Panc1 (cell line): ENCODE measurements at regions of chr11 and their contacts with region 1.

Region 1: DNA sequence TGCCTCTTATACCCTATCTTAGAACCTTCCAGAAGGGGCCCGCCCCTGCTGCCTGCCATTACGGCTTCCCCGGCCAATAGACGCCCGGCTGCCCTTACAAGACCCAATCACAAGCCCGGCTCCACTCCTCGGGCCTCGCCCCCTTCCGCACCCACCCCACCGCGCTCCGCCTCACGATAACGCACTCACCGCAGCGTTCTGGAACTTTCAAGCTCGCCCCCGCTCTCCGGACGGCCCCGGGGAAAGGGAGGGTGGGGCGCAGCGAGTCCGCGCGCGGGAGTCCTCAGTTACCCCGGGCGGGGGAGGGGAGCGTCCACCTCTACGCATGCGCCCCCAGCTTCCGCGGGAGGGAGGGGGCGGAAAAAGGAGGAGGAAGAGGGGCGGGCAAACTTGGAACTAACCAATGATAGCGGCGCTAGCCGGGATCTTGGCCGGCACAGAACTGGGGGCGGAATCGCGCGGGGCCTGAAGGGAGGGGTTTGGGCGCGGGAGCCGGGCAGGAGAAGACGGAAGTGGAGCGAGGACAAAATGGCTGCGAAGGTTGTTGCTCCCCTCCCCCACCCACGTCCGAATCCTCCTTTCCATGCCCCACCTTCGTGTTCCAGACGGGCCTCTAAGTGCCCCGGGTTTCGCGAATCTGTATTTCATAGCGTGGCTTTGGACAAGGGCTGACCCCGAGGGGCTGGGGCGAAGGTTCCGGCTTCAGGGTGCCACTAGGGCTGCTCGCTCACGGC is 389 bp upstream of the HSPA8 start:
- DNase-seq: peak; percentile 93
- ATAC-seq: peak; percentile 93
- H3K4me3 ChIP-seq: peak overlapping the region; percentile 95 to 98
- H3K27ac ChIP-seq: peak overlapping the region; percentile 100
- H3K4me1 ChIP-seq: peaks cover 29% of the 10 kb centered on the region
- H3K27me3 ChIP-seq: no peaks in the 10 kb centered on the region
- CTCF ChIP-seq: no peak

Region 2: DNA sequence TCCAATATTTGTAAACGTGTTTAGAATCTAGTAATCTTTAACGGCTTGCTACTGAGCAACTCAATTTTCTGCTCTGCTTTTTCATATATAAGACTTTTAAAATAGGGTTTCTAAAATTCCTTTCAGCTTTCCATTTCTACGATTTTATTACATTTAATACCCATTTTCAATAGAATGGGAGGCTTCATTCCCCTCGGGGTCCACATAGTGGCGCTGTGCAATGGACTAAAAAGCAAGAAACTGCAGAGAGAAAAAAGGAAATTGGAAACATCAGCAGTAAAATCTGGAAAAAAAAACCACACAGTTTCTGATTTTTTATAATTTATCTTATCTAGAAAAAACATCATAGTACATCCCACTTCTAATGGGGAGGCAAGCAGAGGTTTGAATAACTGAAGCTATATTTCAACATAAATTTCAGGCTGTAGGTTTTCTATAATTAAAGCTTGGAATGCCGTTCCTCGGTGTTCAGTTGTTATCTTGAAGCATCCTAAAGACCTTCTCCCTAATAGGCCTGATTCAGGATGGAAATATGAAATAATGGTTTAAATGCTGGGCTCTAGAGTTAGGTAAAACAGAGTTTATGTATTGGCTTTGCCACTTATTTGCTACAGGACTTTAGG is 198.5 kb before region 1 on chr11:
- CTCF ChIA-PET with region 1: interaction called, 4 read pairs
- POLR2A ChIA-PET with region 1: interaction called, 16 read pairs
- in situ Hi-C with region 1: no loop called
- intact Hi-C with region 1: loop called (anchors 10 kb)
- DNase-seq: no peak
- ATAC-seq: no peak
- H3K4me3 ChIP-seq: no peak overlapping the region
- H3K27ac ChIP-seq: no peak overlapping the region
- H3K4me1 ChIP-seq: peaks cover 4% of the 10 kb centered on the region; the same call in 1 of the 2 replicates
- H3K27me3 ChIP-seq: no peaks in the 10 kb centered on the region
- CTCF ChIP-seq: peak; percentile 90; the same call in 1 of the 2 replicates

Region 3: GRCh38 chr11:123083623-123084029 is 21.3 kb after region 1 on chr11:
- CTCF ChIA-PET with region 1: interaction called, 11 read pairs
- POLR2A ChIA-PET with region 1: no interaction called
- in situ Hi-C with region 1: no loop called
- intact Hi-C with region 1: no loop called
- DNase-seq: peak; percentile 78
- ATAC-seq: peak; percentile 75
- H3K4me3 ChIP-seq: no peak overlapping the region
- H3K27ac ChIP-seq: no peak overlapping the region
- H3K4me1 ChIP-seq: peaks cover 4% of the 10 kb centered on the region; the same call in 1 of the 2 replicates
- H3K27me3 ChIP-seq: no peaks in the 10 kb centered on the region
- CTCF ChIP-seq: no peak

Region 4: DNA sequence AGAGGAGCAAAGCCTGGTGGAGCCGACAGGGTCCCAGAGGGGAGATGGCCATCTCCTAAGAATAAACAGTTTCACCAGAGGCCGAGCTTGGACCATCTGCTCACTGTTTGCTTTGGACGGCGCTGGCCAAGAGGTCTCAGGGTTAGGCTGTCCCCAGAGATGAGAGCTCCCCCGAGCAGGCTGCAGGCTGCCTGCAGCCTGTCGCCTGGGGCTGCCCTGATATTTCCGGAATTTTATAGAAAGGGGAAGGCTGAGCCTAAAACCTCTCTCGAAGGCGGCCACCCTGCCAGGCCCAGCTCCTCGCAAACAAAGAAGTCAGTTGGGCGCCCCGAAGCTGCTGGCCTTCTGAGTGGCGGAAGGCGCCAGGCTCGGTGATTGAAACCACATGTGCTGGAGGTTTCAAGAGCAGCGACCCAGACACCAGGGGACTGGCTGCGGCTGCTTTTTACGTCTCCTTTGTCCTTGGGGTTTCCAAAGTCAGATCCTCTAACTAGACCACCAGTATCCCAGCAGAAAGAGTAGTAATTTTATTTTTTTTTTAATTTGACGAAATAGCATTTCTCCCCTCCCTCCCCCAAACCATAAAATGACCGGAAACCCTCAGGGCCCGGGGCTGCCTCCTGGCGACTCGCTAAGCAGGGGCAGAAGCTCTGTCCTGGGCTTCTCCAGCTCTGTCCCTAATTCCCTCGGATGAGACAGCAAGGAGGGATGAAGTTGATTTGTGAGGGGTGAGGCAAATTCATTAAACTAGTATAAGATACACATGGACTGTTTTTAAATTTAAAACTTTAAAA is 75.3 kb after region 1 on chr11:
- CTCF ChIA-PET with region 1: no interaction called
- POLR2A ChIA-PET with region 1: no interaction called
- in situ Hi-C with region 1: no loop called
- intact Hi-C with region 1: no loop called
- DNase-seq: no peak
- ATAC-seq: no peak
- H3K4me3 ChIP-seq: no peak overlapping the region
- H3K27ac ChIP-seq: no peak overlapping the region
- H3K4me1 ChIP-seq: no peaks in the 10 kb centered on the region
- H3K27me3 ChIP-seq: no peaks in the 10 kb centered on the region
- CTCF ChIP-seq: no peak

Region 5: GRCh38 chr11:123159183-123159857 is 97.0 kb after region 1 on chr11:
- CTCF ChIA-PET with region 1: no interaction called
- POLR2A ChIA-PET with region 1: interaction called, 19 read pairs
- in situ Hi-C with region 1: no loop called
- intact Hi-C with region 1: no loop called
- DNase-seq: no peak
- ATAC-seq: no peak
- H3K4me3 ChIP-seq: no peak overlapping the region
- H3K27ac ChIP-seq: no peak overlapping the region
- H3K4me1 ChIP-seq: no peaks in the 10 kb centered on the region
- H3K27me3 ChIP-seq: no peaks in the 10 kb centered on the region
- CTCF ChIP-seq: no peak